ENCODE measurements at regions of chr5 and their contacts with region 1.

Region 1: GRCh38 chr5:125484742-125485641 is 738.6 kb upstream of the ZNF608 start:
- DNase-seq: peak; percentile 96
- H3K4me3 ChIP-seq: peak overlapping the region in 1 of 3 experiments; percentile 28
- H3K27ac ChIP-seq: peak overlapping the region; percentile 99
- H3K4me1 ChIP-seq: peaks cover 36% of the 10 kb centered on the region
- H3K27me3 ChIP-seq: no peaks in the 10 kb centered on the region
- CTCF ChIP-seq: no peak
- POLR2A ChIP-seq: peak; percentile 72

Region 2: GRCh38 chr5:123881759-123882244 is 1603.2 kb before region 1 on chr5:
- CTCF ChIA-PET with region 1: no interaction called
- POLR2A ChIA-PET with region 1: no interaction called
- dilution Hi-C with region 1: no loop called
- intact Hi-C with region 1: loop called (anchors 5 kb)
- DNase-seq: peak; percentile 90
- H3K4me3 ChIP-seq: peak overlapping the region in 1 of 3 experiments; percentile 58
- H3K27ac ChIP-seq: peak overlapping the region; percentile 48
- H3K4me1 ChIP-seq: peaks cover 27% of the 10 kb centered on the region
- H3K27me3 ChIP-seq: peaks cover 3 to 7% of the 10 kb centered on the region in 2 experiments
- CTCF ChIP-seq: no peak
- POLR2A ChIP-seq: no peak

Region 3: DNA sequence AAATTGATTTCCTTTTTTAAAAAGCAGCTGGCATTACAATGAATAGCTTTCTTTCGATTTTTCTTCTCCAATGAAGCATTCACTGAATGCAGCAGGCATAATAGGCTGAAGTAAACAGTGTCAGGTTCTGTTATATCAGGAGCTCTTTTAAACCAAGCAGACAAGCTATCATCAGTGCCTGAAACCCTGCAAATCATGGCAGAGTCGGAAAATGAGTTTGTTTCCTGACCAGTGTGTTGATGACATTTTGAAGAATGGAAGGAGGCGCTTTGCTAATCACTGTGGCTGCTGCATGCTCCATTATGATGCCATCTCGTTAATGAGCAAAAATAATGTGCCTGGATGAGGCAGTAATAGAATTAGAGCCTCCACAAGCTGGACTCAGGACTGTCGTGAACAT is 1023.1 kb before region 1 on chr5:
- CTCF ChIA-PET with region 1: no interaction called
- POLR2A ChIA-PET with region 1: no interaction called
- dilution Hi-C with region 1: no loop called
- intact Hi-C with region 1: no loop called
- DNase-seq: no peak
- H3K4me3 ChIP-seq: no peak overlapping the region
- H3K27ac ChIP-seq: no peak overlapping the region
- H3K4me1 ChIP-seq: no peaks in the 10 kb centered on the region
- H3K27me3 ChIP-seq: peaks cover 0 to 2% of the 10 kb centered on the region in 2 experiments
- CTCF ChIP-seq: no peak
- POLR2A ChIP-seq: no peak

Region 4: GRCh38 chr5:124948062-124948753 is 536.8 kb before region 1 on chr5:
- CTCF ChIA-PET with region 1: no interaction called
- POLR2A ChIA-PET with region 1: no interaction called
- dilution Hi-C with region 1: no loop called
- intact Hi-C with region 1: loop called (anchors 5 kb)
- DNase-seq: peak; percentile 90
- H3K4me3 ChIP-seq: no peak overlapping the region
- H3K27ac ChIP-seq: no peak overlapping the region
- H3K4me1 ChIP-seq: peaks cover 9% of the 10 kb centered on the region
- H3K27me3 ChIP-seq: no peaks in the 10 kb centered on the region
- CTCF ChIP-seq: no peak
- POLR2A ChIP-seq: no peak

Region 5: GRCh38 chr5:125256296-125256695 is 228.7 kb before region 1 on chr5:
- CTCF ChIA-PET with region 1: no interaction called
- POLR2A ChIA-PET with region 1: no interaction called
- dilution Hi-C with region 1: no loop called
- intact Hi-C with region 1: no loop called
- DNase-seq: no peak
- H3K4me3 ChIP-seq: no peak overlapping the region
- H3K27ac ChIP-seq: no peak overlapping the region
- H3K4me1 ChIP-seq: no peaks in the 10 kb centered on the region
- H3K27me3 ChIP-seq: no peaks in the 10 kb centered on the region
- CTCF ChIP-seq: no peak
- POLR2A ChIP-seq: no peak

Region 6: GRCh38 chr5:125311743-125312142 is 173.2 kb before region 1 on chr5:
- CTCF ChIA-PET with region 1: no interaction called
- POLR2A ChIA-PET with region 1: no interaction called
- dilution Hi-C with region 1: no loop called
- intact Hi-C with region 1: loop called (anchors 10 kb)
- DNase-seq: peak; percentile 77
- H3K4me3 ChIP-seq: no peak overlapping the region
- H3K27ac ChIP-seq: peak overlapping the region; percentile 58
- H3K4me1 ChIP-seq: peaks cover 11% of the 10 kb centered on the region
- H3K27me3 ChIP-seq: no peaks in the 10 kb centered on the region
- CTCF ChIP-seq: no peak
- POLR2A ChIP-seq: no peak

Region 7: DNA sequence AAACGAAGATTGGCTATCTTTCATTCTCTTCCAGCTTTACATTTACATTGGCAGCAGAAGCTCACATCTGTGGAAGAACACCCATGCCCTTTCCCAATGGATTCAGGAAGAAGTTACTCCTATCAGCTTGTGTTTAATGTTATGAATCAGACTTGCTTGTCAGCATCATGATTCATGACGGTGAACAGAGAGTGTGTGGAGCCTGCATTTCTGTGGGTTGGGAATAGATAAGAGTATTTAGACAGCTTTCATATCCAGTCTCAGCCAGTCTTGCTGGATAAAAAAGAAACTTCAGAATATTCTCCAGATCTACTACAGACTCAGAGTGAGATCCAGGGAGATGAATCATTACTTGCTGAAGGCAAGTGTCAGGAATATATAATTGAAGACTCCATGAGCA is 74.3 kb after region 1 on chr5:
- CTCF ChIA-PET with region 1: interaction called, 4 read pairs
- POLR2A ChIA-PET with region 1: no interaction called
- dilution Hi-C with region 1: no loop called
- intact Hi-C with region 1: loop called (anchors 2 kb)
- DNase-seq: peak; percentile 99
- H3K4me3 ChIP-seq: peak overlapping the region in 1 of 3 experiments; percentile 13
- H3K27ac ChIP-seq: peak overlapping the region; percentile 51
- H3K4me1 ChIP-seq: peaks cover 17% of the 10 kb centered on the region
- H3K27me3 ChIP-seq: no peaks in the 10 kb centered on the region
- CTCF ChIP-seq: no peak
- POLR2A ChIP-seq: peak; percentile 74

Region 8: DNA sequence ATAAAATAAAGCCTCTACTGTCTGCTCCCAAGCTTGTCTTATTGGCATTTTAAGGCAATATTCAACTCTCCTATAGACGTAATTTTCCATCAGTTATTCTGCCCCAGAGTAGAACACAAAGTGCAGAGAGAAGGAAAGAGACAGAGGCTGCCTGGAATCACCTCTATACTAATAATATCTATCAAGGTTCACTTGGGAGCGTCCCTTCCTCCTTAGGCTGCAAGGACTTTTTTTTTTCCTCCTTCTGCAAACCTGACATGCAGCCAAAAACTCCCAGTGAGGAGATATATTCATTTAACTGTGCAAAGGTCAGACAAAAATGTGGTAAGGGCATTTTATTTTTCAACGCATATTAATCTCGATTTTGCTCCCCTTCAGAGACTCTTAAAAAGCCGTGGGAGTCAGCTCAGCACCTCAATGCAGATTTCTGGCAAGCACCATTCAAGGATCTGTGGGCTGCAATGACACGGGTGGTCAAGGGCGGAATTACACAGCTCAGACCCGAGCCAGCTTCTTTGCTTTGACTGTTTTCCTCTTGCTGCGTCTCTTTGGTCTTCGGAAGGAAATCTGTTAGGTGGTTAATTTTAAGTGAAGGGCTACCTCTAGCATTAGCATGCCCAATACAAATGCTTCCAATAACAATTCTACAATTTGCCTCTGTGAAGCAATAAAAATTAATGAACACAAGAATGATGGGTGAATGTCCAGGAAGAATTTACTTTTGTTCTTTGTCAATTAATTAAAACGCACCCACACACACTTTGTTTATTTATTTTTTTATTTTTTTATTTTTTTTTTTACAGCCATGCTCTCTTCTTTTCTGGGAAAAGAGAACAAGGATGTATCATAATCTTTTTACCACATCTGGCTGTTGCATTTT is 350.5 kb after region 1 on chr5:
- CTCF ChIA-PET with region 1: interaction called, 6 read pairs
- POLR2A ChIA-PET with region 1: no interaction called
- dilution Hi-C with region 1: no loop called
- intact Hi-C with region 1: loop called (anchors 2 kb)
- DNase-seq: peak; percentile 68
- H3K4me3 ChIP-seq: no peak overlapping the region
- H3K27ac ChIP-seq: no peak overlapping the region
- H3K4me1 ChIP-seq: no peaks in the 10 kb centered on the region
- H3K27me3 ChIP-seq: no peaks in the 10 kb centered on the region
- CTCF ChIP-seq: peak; percentile 60 to 73
- POLR2A ChIP-seq: no peak

Measured in endothelial cell of umbilical vein (primary cell).